Transverse colon (tissue), 4 donors: ENCODE measurements at regions of chr21 and their contacts with region 1.

Region 1: DNA sequence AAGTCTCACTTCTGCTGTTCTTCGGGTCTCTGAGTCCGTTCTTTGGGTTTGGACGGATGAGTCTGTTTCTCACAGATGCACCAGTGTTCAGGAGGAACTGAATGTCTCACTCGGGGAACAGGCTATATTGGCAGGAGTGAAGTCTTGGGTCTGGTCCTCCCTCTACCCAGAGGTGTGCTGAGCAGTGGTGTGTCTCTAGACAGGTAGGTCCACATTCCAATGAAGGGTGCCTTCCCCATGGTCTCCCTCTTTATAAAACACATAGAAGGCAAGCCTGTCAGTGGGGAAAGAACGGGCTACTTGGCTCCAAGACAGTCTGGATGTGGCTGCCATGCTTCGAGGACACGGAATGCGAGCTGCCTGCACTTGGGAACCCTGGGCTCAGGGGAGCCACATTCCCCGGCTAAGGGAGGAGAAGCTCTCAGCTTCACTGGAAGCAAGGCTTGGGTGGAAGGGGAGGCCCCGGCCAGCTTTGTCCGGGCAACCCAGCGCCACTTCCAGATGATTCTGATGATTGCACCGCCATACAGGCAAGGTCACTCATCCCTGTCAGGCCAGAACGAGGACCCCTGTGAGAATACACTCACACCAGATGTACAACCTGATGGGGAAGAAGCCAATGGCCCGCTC is 29.7 kb upstream of the RIPK4 start:
- DNase-seq: no peak
- H3K4me3 ChIP-seq: no peak overlapping the region
- H3K27ac ChIP-seq: no peak overlapping the region
- H3K4me1 ChIP-seq: no peaks in the 10 kb centered on the region
- H3K27me3 ChIP-seq: peaks cover 16% of the 10 kb centered on the region
- CTCF ChIP-seq: no peak
- EP300 ChIP-seq: no peak
- POLR2A ChIP-seq: no peak

Region 2: DNA sequence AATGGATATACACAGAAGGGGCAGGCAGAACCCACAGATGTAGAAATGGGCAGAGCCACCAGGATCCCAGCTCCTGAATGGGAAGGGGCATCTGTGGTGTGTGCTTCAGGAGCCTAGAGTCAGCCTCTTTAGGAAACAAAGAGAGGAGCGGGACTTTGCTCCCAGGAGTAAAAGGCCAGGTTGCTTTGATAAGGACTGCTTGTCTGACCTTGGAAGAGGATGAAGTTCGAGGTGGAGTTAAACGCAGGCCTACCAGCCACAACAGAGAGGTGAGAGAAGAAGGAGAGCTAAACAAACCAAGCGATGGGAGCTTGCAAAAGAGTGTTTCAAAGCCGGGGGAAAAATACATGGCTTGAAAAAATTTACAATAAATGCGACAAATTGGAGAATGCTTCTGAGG is 238.7 kb before region 1 on chr21:
- in situ Hi-C with region 1: no loop called
- intact Hi-C with region 1: no loop called
- DNase-seq: no peak
- H3K4me3 ChIP-seq: no peak overlapping the region
- H3K27ac ChIP-seq: no peak overlapping the region
- H3K4me1 ChIP-seq: peaks cover 7 to 37% (median 20%) of the 10 kb centered on the region in 4 donors
- H3K27me3 ChIP-seq: no peaks in the 10 kb centered on the region
- CTCF ChIP-seq: no peak
- EP300 ChIP-seq: no peak
- POLR2A ChIP-seq: no peak

Region 3: DNA sequence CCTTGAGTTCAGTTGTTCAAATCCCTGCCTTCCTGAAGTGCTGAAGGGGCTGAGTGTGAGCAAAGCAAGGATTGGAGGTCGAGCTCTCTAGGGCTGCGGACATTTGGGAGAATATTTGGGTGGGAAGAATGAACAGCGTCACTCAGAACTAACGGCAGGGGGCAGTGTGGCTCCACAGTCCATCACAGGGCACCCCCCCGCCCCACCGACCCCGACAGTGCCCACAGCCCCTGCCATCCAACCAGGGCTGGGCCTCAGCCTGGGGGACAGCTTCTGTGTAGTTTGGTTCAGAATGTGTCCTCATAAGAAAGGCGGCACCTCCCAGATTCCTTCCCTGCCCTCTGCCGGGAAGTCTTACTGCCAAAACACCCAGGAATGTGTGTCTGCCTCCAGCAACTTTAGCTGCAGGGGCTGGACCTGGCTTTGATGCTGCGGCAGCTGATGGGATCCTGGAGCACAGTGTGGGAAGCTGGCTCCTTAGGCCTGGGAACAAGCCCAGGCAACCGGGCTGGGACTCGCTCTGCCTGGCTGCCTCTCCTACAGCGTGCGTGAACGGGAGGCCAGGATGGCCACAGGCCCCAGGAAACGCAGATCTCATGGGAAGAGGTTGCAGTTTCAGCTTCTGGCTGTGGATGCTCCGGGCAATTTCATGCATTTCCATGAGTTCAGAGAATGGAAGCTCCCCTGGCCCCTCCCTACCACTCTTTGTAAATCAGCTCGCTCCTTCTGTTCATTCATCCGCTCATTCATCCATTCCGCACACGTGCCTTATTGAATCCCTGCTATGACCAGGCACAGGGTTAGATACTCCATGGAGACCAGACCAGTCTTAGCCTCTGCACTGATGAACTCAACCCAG is 183.7 kb before region 1 on chr21:
- in situ Hi-C with region 1: loop called in 1 of 4 experiments (anchors 10 kb)
- intact Hi-C with region 1: no loop called
- DNase-seq: peak; percentile 57
- H3K4me3 ChIP-seq: no peak overlapping the region
- H3K27ac ChIP-seq: peak overlapping the region; percentile 20 to 60 (median 52)
- H3K4me1 ChIP-seq: peaks cover 8 to 39% (median 12%) of the 10 kb centered on the region in 4 donors
- H3K27me3 ChIP-seq: peaks cover 11% of the 10 kb centered on the region
- CTCF ChIP-seq: peak; percentile 67 to 75 (median 72)
- EP300 ChIP-seq: peak; percentile 20
- POLR2A ChIP-seq: no peak